ENCODE measurements at regions of chr15 and their contacts with region 1.

Region 1: GRCh38 chr15:43903864-43904290 is 77.1 kb downstream of the WDR76 start:
- DNase-seq: peak; percentile 47
- ATAC-seq: peak; percentile 87
- H3K4me3 ChIP-seq: no peak overlapping the region
- H3K27ac ChIP-seq: no peak overlapping the region
- H3K4me1 ChIP-seq: no peaks in the 10 kb centered on the region
- H3K27me3 ChIP-seq: no peaks in the 10 kb centered on the region
- CTCF ChIP-seq: peak; percentile 93

Region 2: DNA sequence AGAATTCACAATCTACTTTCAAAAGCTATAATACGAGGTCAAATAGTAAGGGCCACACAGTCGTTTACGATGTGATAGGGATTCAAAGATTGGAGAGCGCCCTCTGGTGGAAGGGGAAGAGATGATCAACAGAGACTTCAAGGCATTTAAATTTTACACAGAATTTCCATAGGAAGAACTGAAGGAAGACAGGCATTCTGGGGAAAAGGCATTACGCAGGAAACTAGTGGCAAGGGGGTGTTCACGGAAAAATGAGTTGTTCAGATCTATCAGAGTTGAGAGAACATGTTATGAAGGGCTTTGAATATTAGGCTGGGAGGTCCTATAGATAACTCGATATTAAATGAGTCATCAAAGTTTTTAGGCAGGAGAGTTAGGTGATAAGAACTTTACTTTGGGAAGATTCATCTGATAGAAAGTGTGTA is 162.5 kb after region 1 on chr15:
- CTCF ChIA-PET with region 1: no interaction called
- POLR2A ChIA-PET with region 1: no interaction called
- in situ Hi-C with region 1: no loop called
- intact Hi-C with region 1: loop called (anchors 5 kb)
- DNase-seq: peak; percentile 58
- ATAC-seq: peak; percentile 85
- H3K4me3 ChIP-seq: peak overlapping the region in 1 of 2 experiments; percentile 30; a peak in 2 of 4 replicates
- H3K27ac ChIP-seq: peak overlapping the region; percentile 74
- H3K4me1 ChIP-seq: peaks cover 7% of the 10 kb centered on the region
- H3K27me3 ChIP-seq: no peaks in the 10 kb centered on the region
- CTCF ChIP-seq: peak; percentile 86